ENCODE measurements at regions of chr5 and their contacts with region 1.

Region 1: GRCh38 chr5:173887610-173888472 is at the start of gene CPEB4:
- DNase-seq: peak; percentile 98 to 99
- ATAC-seq: peak; percentile 97
- H3K4me3 ChIP-seq: peak within 1 kb of the TSS; percentile 97 to 99
- H3K27ac ChIP-seq: peak within 1 kb of the TSS; percentile 58 to 96
- H3K4me1 ChIP-seq: no peaks in the 10 kb centered on the region
- H3K27me3 ChIP-seq: no peaks in the 10 kb centered on the region
- total RNA-seq, gene CPEB4: 50.4 to 80.1 TPM

Region 2: GRCh38 chr5:173271419-173271818 is 616.4 kb before region 1 on chr5:
- intact Hi-C with region 1: no loop called
- DNase-seq: peak in 1 of 2 donors; percentile 68
- ATAC-seq: no peak
- H3K4me3 ChIP-seq: no peak overlapping the region
- H3K27ac ChIP-seq: no peak overlapping the region
- H3K4me1 ChIP-seq: no peaks in the 10 kb centered on the region
- H3K27me3 ChIP-seq: no peaks in the 10 kb centered on the region

Region 3: GRCh38 chr5:173709761-173710160 is 178.1 kb before region 1 on chr5:
- intact Hi-C with region 1: loop called in 1 of 2 experiments (anchors 2 kb)
- DNase-seq: peak in 1 of 2 donors; percentile 51
- ATAC-seq: no peak
- H3K4me3 ChIP-seq: no peak overlapping the region
- H3K27ac ChIP-seq: no peak overlapping the region
- H3K4me1 ChIP-seq: no peaks in the 10 kb centered on the region
- H3K27me3 ChIP-seq: no peaks in the 10 kb centered on the region

Region 4: GRCh38 chr5:173823711-173824528 is 63.9 kb before region 1 on chr5:
- intact Hi-C with region 1: loop called in 1 of 2 experiments (anchors 1 kb)
- DNase-seq: no peak
- ATAC-seq: no peak
- H3K4me3 ChIP-seq: no peak overlapping the region
- H3K27ac ChIP-seq: peak overlapping the region; percentile 60 to 79
- H3K4me1 ChIP-seq: no peaks in the 10 kb centered on the region
- H3K27me3 ChIP-seq: no peaks in the 10 kb centered on the region

Region 5: GRCh38 chr5:173925448-173926071 is 37.7 kb after region 1 on chr5:
- intact Hi-C with region 1: loop called in 1 of 2 experiments (anchors 5 kb)
- DNase-seq: peak in 1 of 2 donors; percentile 55
- ATAC-seq: no peak
- H3K4me3 ChIP-seq: no peak overlapping the region
- H3K27ac ChIP-seq: peak overlapping the region; percentile 59 to 70
- H3K4me1 ChIP-seq: peaks cover 2 to 29% of the 10 kb centered on the region in 2 donors
- H3K27me3 ChIP-seq: no peaks in the 10 kb centered on the region

Region 6: GRCh38 chr5:174145821-174146220 is 258.0 kb after region 1 on chr5:
- intact Hi-C with region 1: no loop called
- DNase-seq: no peak
- ATAC-seq: no peak
- H3K4me3 ChIP-seq: no peak overlapping the region
- H3K27ac ChIP-seq: no peak overlapping the region
- H3K4me1 ChIP-seq: no peaks in the 10 kb centered on the region
- H3K27me3 ChIP-seq: no peaks in the 10 kb centered on the region

Measured in aorta (tissue), 5 donors.